GM10248 (cell line): ENCODE measurements at regions of chr11 and their contacts with region 1.

Region 1: GRCh38 chr11:64803163-64803845 is at the start of gene MAP4K2:
- DNase-seq: peak; percentile 98
- CTCF ChIP-seq: peak; percentile 20

Region 2: GRCh38 chr11:64787526-64788320 is 15.6 kb before region 1 on chr11:
- CTCF ChIA-PET with region 1: interaction called, 49 read pairs
- POLR2A ChIA-PET with region 1: interaction called, 6 read pairs
- DNase-seq: peak; percentile 76
- CTCF ChIP-seq: peak; percentile 74